PC-9 (cell line): ENCODE measurements at regions of chr20 and their contacts with region 1.

Region 1: GRCh38 chr20:32902456-32903420 is 44.0 kb downstream of the EFCAB8 start:
- DNase-seq: peak in 1 of 2 experiments; percentile 53
- H3K4me3 ChIP-seq: no peak overlapping the region
- H3K27ac ChIP-seq: no peak overlapping the region
- H3K4me1 ChIP-seq: no peaks in the 10 kb centered on the region
- H3K27me3 ChIP-seq: peaks cover 39% of the 10 kb centered on the region; the same call in 1 of the 2 replicates
- CTCF ChIP-seq: peak; percentile 93

Region 2: DNA sequence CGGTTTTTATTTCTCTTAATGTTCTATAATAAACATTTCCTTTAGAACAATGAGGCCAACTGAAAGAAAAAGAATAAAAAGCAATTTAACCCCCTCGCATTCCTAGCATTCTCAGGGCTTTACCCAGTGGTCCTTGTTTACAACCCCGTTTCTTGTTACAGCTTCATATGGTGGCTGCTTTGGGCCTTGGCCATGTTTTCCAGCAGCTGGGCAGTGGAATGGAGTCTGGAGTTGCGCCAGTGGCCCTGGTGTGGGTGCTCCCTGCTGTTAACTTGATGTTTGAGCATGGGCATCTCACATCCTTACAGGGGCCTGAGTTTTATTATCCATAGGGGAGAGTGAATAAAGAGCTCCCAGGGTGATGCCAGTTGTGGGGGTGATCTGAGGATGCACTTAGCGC is 25.2 kb before region 1 on chr20:
- CTCF ChIA-PET with region 1: interaction called, 20 read pairs
- POLR2A ChIA-PET with region 1: no interaction called
- intact Hi-C with region 1: no loop called
- DNase-seq: no peak
- H3K4me3 ChIP-seq: no peak overlapping the region
- H3K27ac ChIP-seq: no peak overlapping the region
- H3K4me1 ChIP-seq: no peaks in the 10 kb centered on the region
- H3K27me3 ChIP-seq: peaks cover 39% of the 10 kb centered on the region
- CTCF ChIP-seq: no peak

Region 3: DNA sequence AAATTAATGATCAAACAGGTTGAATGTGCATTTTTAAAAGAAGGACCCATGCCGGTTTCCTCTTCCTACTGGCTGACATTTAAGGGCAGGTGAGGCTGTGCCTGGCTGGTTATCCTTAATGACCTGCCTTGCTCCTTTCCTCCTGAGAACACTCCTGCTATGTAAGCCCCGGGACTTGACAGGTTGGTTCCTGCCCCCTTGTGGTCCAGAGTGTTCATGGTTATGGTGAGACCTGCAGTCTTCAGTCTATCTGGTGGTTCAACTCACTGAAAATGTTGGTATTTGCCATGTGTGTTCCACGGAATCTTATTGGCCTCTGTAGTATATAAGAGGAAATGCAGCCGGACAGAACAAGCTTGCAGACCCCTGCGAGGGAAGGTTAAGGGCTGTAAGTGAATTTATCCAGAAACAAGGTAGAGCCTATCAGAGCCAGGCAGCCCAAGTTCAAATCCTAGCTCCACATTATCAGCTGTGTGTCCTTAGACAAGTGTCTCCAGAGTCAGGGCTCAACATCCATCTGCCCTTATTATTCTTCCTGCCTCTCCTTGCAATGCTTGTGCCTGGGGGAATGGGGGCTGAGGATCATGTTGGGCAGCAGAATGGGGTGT is 309.2 kb after region 1 on chr20:
- CTCF ChIA-PET with region 1: no interaction called
- POLR2A ChIA-PET with region 1: no interaction called
- intact Hi-C with region 1: loop called (anchors 2 kb)
- DNase-seq: peak; percentile 38 to 74
- H3K4me3 ChIP-seq: no peak overlapping the region
- H3K27ac ChIP-seq: no peak overlapping the region
- H3K4me1 ChIP-seq: no peaks in the 10 kb centered on the region
- H3K27me3 ChIP-seq: peaks cover 23% of the 10 kb centered on the region
- CTCF ChIP-seq: peak; percentile 70

Region 4: DNA sequence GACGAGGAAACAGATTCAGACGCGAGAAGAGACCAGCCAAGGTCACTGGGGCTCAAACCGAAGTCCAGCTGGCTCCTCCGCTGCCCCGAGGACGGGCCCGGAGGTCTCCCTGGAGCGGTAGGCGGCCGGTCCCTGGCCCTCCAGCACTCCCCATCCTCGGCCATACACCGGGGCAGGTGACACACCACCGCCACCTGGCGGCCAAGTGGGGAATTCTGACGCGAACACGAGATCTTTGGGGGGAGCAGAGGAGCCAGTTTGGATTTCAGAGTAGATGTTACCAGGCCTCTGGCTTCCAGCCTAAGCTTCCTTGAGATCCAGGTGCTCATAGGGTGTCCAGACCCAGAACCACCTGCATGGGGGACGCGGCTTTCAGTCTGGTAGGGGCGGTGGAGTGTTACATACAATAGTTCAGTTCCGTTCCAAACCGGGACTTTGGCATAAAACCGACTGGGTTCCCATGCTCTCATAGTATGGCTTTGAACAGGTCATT is 396.4 kb after region 1 on chr20:
- CTCF ChIA-PET with region 1: no interaction called
- POLR2A ChIA-PET with region 1: no interaction called
- intact Hi-C with region 1: loop called (anchors 2 kb)
- DNase-seq: peak; percentile 33 to 74
- H3K4me3 ChIP-seq: no peak overlapping the region
- H3K27ac ChIP-seq: no peak overlapping the region
- H3K4me1 ChIP-seq: no peaks in the 10 kb centered on the region
- H3K27me3 ChIP-seq: peaks cover 4% of the 10 kb centered on the region; the same call in 1 of the 2 replicates
- CTCF ChIP-seq: peak; percentile 98

Region 5: DNA sequence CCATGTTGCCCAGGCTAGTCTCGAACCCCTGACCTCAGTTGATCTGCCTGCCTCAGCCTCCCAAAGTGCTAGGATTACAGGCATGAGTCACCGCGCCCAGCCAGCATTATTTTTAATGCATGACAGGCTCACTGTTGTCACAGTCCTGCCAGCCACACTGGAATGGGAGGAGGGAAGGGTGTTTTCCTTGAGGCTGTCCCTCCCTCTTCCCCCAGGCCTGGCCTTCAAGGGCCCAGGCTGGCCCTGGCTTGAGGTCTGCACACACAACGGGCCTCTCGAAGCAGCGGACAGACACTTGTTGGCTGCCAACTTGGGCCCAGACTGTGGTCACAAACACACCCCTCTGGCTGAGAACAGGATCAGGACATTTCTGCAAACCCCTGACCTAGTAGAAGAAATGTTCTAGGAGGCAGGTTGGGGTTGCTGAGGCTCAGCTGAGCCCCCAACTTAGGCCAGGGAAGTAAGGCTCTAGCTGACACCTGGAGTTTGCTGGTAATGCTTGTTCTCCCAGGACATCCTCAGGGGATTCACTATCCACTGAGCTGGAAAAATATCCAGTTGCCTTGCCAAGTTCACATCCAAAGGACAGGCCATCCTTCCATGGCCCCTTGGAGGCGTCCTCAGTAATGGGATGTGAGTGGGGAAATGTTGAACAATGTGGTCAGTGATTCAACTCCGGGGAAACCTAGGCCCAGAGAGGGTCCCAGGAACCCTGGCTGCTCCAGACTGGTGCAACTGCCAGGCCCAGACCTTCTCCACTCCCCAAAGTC is 530.9 kb after region 1 on chr20:
- CTCF ChIA-PET with region 1: no interaction called
- POLR2A ChIA-PET with region 1: interaction called, 10 read pairs
- intact Hi-C with region 1: no loop called
- DNase-seq: peak in 1 of 2 experiments; percentile 36
- H3K4me3 ChIP-seq: no peak overlapping the region
- H3K27ac ChIP-seq: no peak overlapping the region
- H3K4me1 ChIP-seq: no peaks in the 10 kb centered on the region
- H3K27me3 ChIP-seq: no peaks in the 10 kb centered on the region
- CTCF ChIP-seq: no peak

Region 6: GRCh38 chr20:34129518-34130162 is 1226.9 kb after region 1 on chr20:
- CTCF ChIA-PET with region 1: no interaction called
- POLR2A ChIA-PET with region 1: no interaction called
- intact Hi-C with region 1: loop called (anchors 5 kb)
- DNase-seq: peak; percentile 55 to 60
- H3K4me3 ChIP-seq: no peak overlapping the region
- H3K27ac ChIP-seq: no peak overlapping the region
- H3K4me1 ChIP-seq: peaks cover 4% of the 10 kb centered on the region
- H3K27me3 ChIP-seq: no peaks in the 10 kb centered on the region
- CTCF ChIP-seq: peak; percentile 91